ENCODE measurements at regions of chr2 and their contacts with region 1.

Region 1: GRCh38 chr2:66517772-66518171 is 82.8 kb downstream of the MEIS1 start:
- DNase-seq: no peak
- H3K4me3 ChIP-seq: no peak overlapping the region
- H3K27me3 ChIP-seq: no peaks in the 10 kb centered on the region
- CTCF ChIP-seq: no peak

Region 2: DNA sequence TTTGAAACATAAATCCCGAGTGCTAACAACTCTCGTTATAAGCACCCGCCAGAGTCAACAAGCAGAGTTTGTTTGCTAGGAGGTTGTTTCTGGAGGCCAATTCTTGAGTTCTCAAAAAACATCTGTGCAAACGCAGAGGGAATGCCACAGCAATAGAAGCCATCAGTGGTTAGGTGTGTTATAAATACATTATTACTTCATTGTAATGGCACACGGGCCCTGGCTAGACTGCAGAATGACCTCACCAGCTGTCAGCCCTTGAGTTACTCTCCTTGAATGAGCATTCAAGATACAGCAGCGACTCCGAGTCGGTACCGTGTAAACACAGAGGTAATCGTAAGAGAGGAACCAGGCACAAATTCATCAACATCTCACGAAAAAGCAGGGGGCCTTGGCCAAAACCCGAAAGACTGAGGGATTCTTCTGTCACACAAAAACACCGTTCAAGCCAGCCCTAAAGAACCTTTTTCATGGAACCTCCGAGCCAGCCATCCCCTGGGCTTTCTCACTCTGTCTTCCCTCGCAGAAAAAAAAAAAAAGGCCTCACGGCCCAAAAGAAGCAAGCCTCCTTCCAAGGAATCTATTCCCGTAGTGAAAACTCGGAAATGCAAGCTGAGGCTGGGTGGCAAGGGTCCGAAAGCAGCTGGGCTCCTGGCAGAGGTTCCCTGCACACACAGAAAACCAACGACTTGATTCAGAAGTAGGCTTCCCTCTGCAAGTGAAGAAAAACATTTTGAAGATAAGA is 216.6 kb before region 1 on chr2:
- CTCF ChIA-PET with region 1: no interaction called
- POLR2A ChIA-PET with region 1: no interaction called
- DNase-seq: no peak
- H3K4me3 ChIP-seq: no peak overlapping the region
- H3K27me3 ChIP-seq: 0 out of 2 replicates have a peak, but pooled peaks cover 1% of the 10 kb centered on the region
- CTCF ChIP-seq: no peak

Region 3: DNA sequence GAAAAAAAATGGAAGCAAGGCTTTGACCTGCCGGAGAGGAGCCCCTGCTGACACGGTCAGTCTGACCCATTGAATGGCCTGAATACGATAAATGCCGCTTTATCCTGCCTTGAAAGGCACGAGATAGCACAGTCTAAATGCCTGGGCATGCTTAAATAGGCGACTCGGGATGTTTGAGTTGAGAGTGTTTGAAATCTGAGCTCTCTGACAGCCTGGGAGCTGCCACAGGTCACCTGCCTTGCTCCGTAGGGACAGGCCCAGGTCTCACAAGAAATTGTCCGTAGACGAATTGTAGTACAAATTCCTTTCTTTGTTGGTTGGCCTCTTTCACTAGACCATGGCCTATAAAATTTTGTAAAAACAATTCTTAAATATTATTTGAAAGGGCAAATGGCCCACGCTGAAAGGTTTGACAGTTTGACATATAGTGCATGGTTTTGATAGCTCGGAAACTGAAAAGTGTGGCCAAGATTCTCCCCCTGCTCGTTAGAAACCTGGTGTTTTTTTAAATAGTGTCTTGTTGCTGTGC is 10.0 kb before region 1 on chr2:
- CTCF ChIA-PET with region 1: no interaction called
- POLR2A ChIA-PET with region 1: no interaction called
- DNase-seq: no peak
- H3K4me3 ChIP-seq: no peak overlapping the region
- H3K27me3 ChIP-seq: no peaks in the 10 kb centered on the region
- CTCF ChIP-seq: no peak

Region 4: GRCh38 chr2:66536997-66537396 is 19.2 kb after region 1 on chr2:
- CTCF ChIA-PET with region 1: interaction called, 3 read pairs
- POLR2A ChIA-PET with region 1: interaction called, 16 read pairs
- DNase-seq: no peak
- H3K4me3 ChIP-seq: no peak overlapping the region
- H3K27me3 ChIP-seq: no peaks in the 10 kb centered on the region
- CTCF ChIP-seq: no peak

Region 5: DNA sequence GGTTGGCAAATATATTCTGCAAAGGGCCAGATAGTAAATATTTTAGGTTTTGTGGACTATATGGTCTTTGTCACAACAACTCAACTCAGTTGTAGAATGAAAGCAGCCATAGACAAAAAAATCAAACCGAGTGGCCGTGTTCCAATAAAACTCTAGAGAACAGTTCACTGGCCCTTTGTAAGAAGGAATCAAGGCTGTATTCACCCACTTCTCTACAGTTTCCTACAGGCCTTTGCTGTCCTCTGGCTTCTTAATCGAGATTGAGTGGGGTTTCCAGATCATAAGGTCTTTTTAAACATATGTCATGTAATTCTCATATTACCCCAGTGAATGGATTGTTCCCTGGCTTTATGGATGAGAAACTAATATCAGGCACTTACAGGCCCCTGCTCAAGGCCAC is 430.5 kb after region 1 on chr2:
- CTCF ChIA-PET with region 1: no interaction called
- POLR2A ChIA-PET with region 1: no interaction called
- DNase-seq: no peak
- H3K4me3 ChIP-seq: no peak overlapping the region
- H3K27me3 ChIP-seq: no peaks in the 10 kb centered on the region
- CTCF ChIP-seq: no peak

Measured in BJ (cell line).